ENCODE measurements at regions of chr3 and their contacts with region 1.

Region 1: GRCh38 chr3:150408221-150409102 is at the start of gene TSC22D2:
- DNase-seq: peak; percentile 96 to 98 (median 97)
- H3K4me3 ChIP-seq: peak within 1 kb of the TSS; percentile 79 to 93
- H3K4me3 Mint-ChIP-seq: peak within 1 kb of the TSS; percentile 85 to 98 (median 89)
- H3K27ac ChIP-seq: peak within 1 kb of the TSS; percentile 95
- H3K27ac Mint-ChIP-seq: peak within 1 kb of the TSS; percentile 89 to 99 (median 98)
- H3K4me1 ChIP-seq: peaks cover 34% of the 10 kb centered on the region
- H3K4me1 Mint-ChIP-seq: peaks cover 23 to 36% (median 30%) of the 10 kb centered on the region in 4 donors
- H3K27me3 ChIP-seq: no peaks in the 10 kb centered on the region
- H3K27me3 Mint-ChIP-seq: no peaks in the 10 kb centered on the region
- total RNA-seq, gene TSC22D2: 25.3 to 25.7 TPM

Region 2: GRCh38 chr3:149958171-149958796 is 450.2 kb before region 1 on chr3:
- CTCF ChIA-PET with region 1: no interaction called
- POLR2A ChIA-PET with region 1: no interaction called
- intact Hi-C with region 1: no loop called
- DNase-seq: no peak
- H3K4me3 ChIP-seq: no peak overlapping the region
- H3K4me3 Mint-ChIP-seq: no peak overlapping the region
- H3K27ac ChIP-seq: no peak overlapping the region
- H3K27ac Mint-ChIP-seq: peak overlapping the region in 3 of 7 donors; percentile 1 to 5 (median 2)
- H3K4me1 ChIP-seq: peaks cover 16% of the 10 kb centered on the region
- H3K4me1 Mint-ChIP-seq: peaks cover 16 to 27% (median 17%) of the 10 kb centered on the region in 4 donors
- H3K27me3 ChIP-seq: no peaks in the 10 kb centered on the region
- H3K27me3 Mint-ChIP-seq: no peaks in the 10 kb centered on the region

Region 3: GRCh38 chr3:149969940-149970715 is 438.3 kb before region 1 on chr3:
- CTCF ChIA-PET with region 1: interaction called, 4 read pairs
- POLR2A ChIA-PET with region 1: interaction called, 4 read pairs
- intact Hi-C with region 1: loop called (anchors 1 kb)
- DNase-seq: peak; percentile 72 to 80 (median 77)
- H3K4me3 ChIP-seq: peak overlapping the region; percentile 8 to 44
- H3K4me3 Mint-ChIP-seq: peak overlapping the region; percentile 89 to 96 (median 90)
- H3K27ac ChIP-seq: peak overlapping the region; percentile 27
- H3K27ac Mint-ChIP-seq: peak overlapping the region; percentile 73 to 91 (median 87)
- H3K4me1 ChIP-seq: peaks cover 12% of the 10 kb centered on the region
- H3K4me1 Mint-ChIP-seq: peaks cover 14 to 20% (median 19%) of the 10 kb centered on the region in 4 donors
- H3K27me3 ChIP-seq: peaks cover 7% of the 10 kb centered on the region
- H3K27me3 Mint-ChIP-seq: peaks cover 7 to 15% of the 10 kb centered on the region in 2 donors

Region 4: GRCh38 chr3:150278843-150279381 is 129.6 kb before region 1 on chr3:
- CTCF ChIA-PET with region 1: no interaction called
- POLR2A ChIA-PET with region 1: no interaction called
- intact Hi-C with region 1: no loop called
- DNase-seq: no peak
- H3K4me3 ChIP-seq: no peak overlapping the region
- H3K4me3 Mint-ChIP-seq: no peak overlapping the region
- H3K27ac ChIP-seq: no peak overlapping the region
- H3K27ac Mint-ChIP-seq: no peak overlapping the region
- H3K4me1 ChIP-seq: no peaks in the 10 kb centered on the region
- H3K4me1 Mint-ChIP-seq: no peaks in the 10 kb centered on the region
- H3K27me3 ChIP-seq: peaks cover 6% of the 10 kb centered on the region
- H3K27me3 Mint-ChIP-seq: peaks cover 8 to 24% of the 10 kb centered on the region in 2 donors

Region 5: GRCh38 chr3:150396956-150397550 is 11.4 kb before region 1 on chr3:
- CTCF ChIA-PET with region 1: interaction called, 7 read pairs
- POLR2A ChIA-PET with region 1: interaction called, 14 read pairs
- intact Hi-C with region 1: no loop called
- DNase-seq: no peak
- H3K4me3 ChIP-seq: no peak overlapping the region
- H3K4me3 Mint-ChIP-seq: no peak overlapping the region
- H3K27ac ChIP-seq: no peak overlapping the region
- H3K27ac Mint-ChIP-seq: no peak overlapping the region
- H3K4me1 ChIP-seq: no peaks in the 10 kb centered on the region
- H3K4me1 Mint-ChIP-seq: no peaks in the 10 kb centered on the region
- H3K27me3 ChIP-seq: no peaks in the 10 kb centered on the region
- H3K27me3 Mint-ChIP-seq: peaks cover 0 to 4% of the 10 kb centered on the region in 2 donors

Region 6: GRCh38 chr3:150449169-150449721 is 40.8 kb after region 1 on chr3:
- CTCF ChIA-PET with region 1: no interaction called
- POLR2A ChIA-PET with region 1: interaction called, 8 read pairs
- intact Hi-C with region 1: loop called (anchors 5 kb)
- DNase-seq: no peak
- H3K4me3 ChIP-seq: no peak overlapping the region
- H3K4me3 Mint-ChIP-seq: no peak overlapping the region
- H3K27ac ChIP-seq: no peak overlapping the region
- H3K27ac Mint-ChIP-seq: peak overlapping the region in 2 of 7 donors; percentile 59 to 69
- H3K4me1 ChIP-seq: peaks cover 27% of the 10 kb centered on the region
- H3K4me1 Mint-ChIP-seq: peaks cover 26 to 57% (median 40%) of the 10 kb centered on the region in 4 donors
- H3K27me3 ChIP-seq: no peaks in the 10 kb centered on the region
- H3K27me3 Mint-ChIP-seq: no peaks in the 10 kb centered on the region

Region 7: DNA sequence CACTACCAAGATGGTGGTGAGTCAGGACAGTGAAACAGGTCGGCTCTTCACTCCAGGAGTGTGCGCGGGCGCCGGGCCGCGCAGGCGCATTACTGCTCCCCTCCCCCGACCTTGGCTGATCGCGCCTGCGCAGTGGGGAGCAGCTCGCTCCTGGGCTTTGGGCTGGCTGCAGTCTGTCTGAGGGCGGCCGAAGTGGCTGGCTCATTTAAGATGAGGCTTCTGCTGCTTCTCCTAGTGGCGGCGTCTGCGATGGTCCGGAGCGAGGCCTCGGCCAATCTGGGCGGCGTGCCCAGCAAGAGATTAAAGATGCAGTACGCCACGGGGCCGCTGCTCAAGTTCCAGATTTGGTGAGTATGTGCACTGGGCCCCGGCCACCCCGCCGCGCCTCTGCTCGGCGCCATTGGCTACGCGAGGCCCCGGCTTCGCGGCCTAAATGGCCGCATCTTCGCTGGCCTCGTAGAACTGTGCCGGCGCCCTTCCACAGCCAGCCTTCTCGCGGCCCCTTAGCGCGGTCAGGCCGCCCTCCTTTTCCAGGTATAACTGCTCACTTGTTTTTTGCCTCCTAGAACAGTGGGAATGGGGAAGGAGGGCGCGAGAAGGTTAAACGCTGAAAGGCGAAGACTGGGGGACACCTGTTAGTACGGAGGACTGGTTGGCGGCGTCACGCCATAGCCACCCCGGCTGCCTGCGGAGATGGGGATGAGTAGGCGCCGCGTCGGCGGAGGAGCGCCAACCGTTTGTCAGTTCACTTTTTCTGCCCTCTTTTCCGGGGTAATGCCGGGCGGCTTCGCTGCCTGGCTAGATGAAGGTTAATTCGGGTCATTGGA is 194.9 kb after region 1 on chr3 and contains the start of gene SELENOT:
- CTCF ChIA-PET with region 1: no interaction called
- POLR2A ChIA-PET with region 1: interaction called, 23 read pairs
- intact Hi-C with region 1: loop called (anchors 1 kb)
- DNase-seq: peak; percentile 92 to 98 (median 96)
- H3K4me3 ChIP-seq: peak within 1 kb of the TSS; percentile 71 to 91
- H3K4me3 Mint-ChIP-seq: peak within 1 kb of the TSS; percentile 92 to 98 (median 96)
- H3K27ac ChIP-seq: peak within 1 kb of the TSS; percentile 97
- H3K27ac Mint-ChIP-seq: peak within 1 kb of the TSS; percentile 97 to 99 (median 98)
- H3K4me1 ChIP-seq: peaks cover 53% of the 10 kb centered on the region
- H3K4me1 Mint-ChIP-seq: peaks cover 37 to 78% (median 61%) of the 10 kb centered on the region in 4 donors
- H3K27me3 ChIP-seq: no peaks in the 10 kb centered on the region
- H3K27me3 Mint-ChIP-seq: no peaks in the 10 kb centered on the region
- total RNA-seq, gene SELENOT: 71.8 to 87.1 TPM

Region 8: GRCh38 chr3:151203051-151203420 is 794.6 kb after region 1 on chr3 and contains the start of gene GPR171:
- CTCF ChIA-PET with region 1: no interaction called
- POLR2A ChIA-PET with region 1: interaction called, 4 read pairs
- intact Hi-C with region 1: loop called (anchors 10 kb)
- DNase-seq: peak; percentile 80 to 87 (median 82)
- H3K4me3 ChIP-seq: peak within 1 kb of the TSS; percentile 59 to 63
- H3K4me3 Mint-ChIP-seq: peak within 1 kb of the TSS; percentile 73 to 89 (median 86)
- H3K27ac ChIP-seq: peak within 1 kb of the TSS; percentile 75
- H3K27ac Mint-ChIP-seq: peak within 1 kb of the TSS; percentile 87 to 98 (median 97)
- H3K4me1 ChIP-seq: peaks cover 83% of the 10 kb centered on the region
- H3K4me1 Mint-ChIP-seq: peaks cover 45 to 94% (median 59%) of the 10 kb centered on the region in 4 donors
- H3K27me3 ChIP-seq: no peaks in the 10 kb centered on the region
- H3K27me3 Mint-ChIP-seq: no peaks in the 10 kb centered on the region
- total RNA-seq, gene GPR171: 116 to 129 TPM

Measured in CD4-positive, alpha-beta memory T cell (primary cell).